Naive thymus-derived CD4-positive, alpha-beta T cell (primary cell): ENCODE measurements at regions of chr1 and their contacts with region 1.

Region 1: GRCh38 chr1:35192853-35193664 is at the start of gene SFPQ:
- DNase-seq: peak; percentile 94 to 99 (median 98)
- ATAC-seq: peak; percentile 94
- H3K4me3 ChIP-seq: peak within 1 kb of the TSS; percentile 72
- H3K4me3 Mint-ChIP-seq: peak within 1 kb of the TSS; percentile 92 to 98 (median 96)
- H3K27ac ChIP-seq: peak within 1 kb of the TSS; percentile 99
- H3K27ac Mint-ChIP-seq: peak within 1 kb of the TSS; percentile 92 to 99 (median 98)
- H3K4me1 ChIP-seq: peaks cover 31 to 32% of the 10 kb centered on the region in 2 donors
- H3K4me1 Mint-ChIP-seq: peaks cover 34 to 52% (median 47%) of the 10 kb centered on the region in 7 donors
- H3K27me3 ChIP-seq: no peaks in the 10 kb centered on the region
- H3K27me3 Mint-ChIP-seq: peaks cover 0 to 5% (median 0%) of the 10 kb centered on the region in 5 donors
- total RNA-seq, gene SFPQ: 316 to 610 (median 356) TPM

Region 2: DNA sequence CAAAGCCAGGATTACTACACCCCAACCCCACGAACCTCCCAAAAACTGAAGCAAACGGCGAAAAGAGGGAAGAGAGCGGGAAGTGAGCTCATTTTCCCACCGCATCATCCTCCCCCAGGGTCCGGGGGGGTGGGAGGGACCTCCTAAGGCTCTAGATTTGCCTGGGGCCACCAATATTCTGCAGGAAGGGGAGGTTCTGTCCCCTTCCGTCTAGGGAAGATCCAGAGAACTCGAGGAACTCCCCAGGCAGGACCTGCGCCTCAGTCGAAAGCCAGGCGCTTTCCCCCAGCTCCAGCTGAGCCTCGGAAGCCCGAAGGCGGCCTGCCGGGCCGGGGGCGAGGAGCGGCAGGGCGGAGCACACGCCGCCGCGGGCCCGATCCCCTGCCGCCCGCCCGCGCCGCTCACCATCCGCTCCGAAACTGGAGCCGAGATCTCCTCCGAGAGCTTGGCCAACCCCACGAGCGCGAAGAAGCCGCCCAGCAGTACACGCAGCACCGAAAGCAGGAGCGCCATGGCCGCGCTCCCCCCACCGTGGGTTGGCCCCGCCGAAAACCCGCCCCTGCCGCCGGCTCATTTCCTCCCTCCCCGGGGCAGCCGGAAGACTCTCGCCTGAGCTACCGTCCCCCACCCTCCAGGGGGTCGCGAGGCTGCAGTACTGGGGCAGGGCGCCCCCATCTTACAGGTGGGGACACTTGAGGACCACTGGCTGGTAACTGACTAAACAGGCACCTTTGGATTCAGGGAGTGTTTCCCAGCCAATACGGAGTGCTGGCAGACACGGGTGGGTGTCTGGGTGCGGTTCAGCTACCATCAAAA is 208.1 kb before region 1 on chr1 and contains the start of gene TMEM35B:
- CTCF ChIA-PET with region 1: no interaction called
- POLR2A ChIA-PET with region 1: interaction called, 8 read pairs
- intact Hi-C with region 1: loop called in 1 of 2 experiments (anchors 1 kb)
- DNase-seq: peak; percentile 69 to 83 (median 79)
- ATAC-seq: peak; percentile 97
- H3K4me3 ChIP-seq: peak within 1 kb of the TSS; percentile 96
- H3K4me3 Mint-ChIP-seq: peak within 1 kb of the TSS; percentile 95 to 100 (median 98)
- H3K27ac ChIP-seq: peak within 1 kb of the TSS; percentile 94
- H3K27ac Mint-ChIP-seq: peak within 1 kb of the TSS; percentile 92 to 99 (median 97)
- H3K4me1 ChIP-seq: peaks cover 16 to 18% of the 10 kb centered on the region in 2 donors
- H3K4me1 Mint-ChIP-seq: peaks cover 12 to 49% (median 40%) of the 10 kb centered on the region in 7 donors
- H3K27me3 ChIP-seq: no peaks in the 10 kb centered on the region
- H3K27me3 Mint-ChIP-seq: no peaks in the 10 kb centered on the region
- total RNA-seq, gene TMEM35B: 5.4 to 37.7 (median 32.8) TPM

Region 3: GRCh38 chr1:35079003-35079930 is 113.8 kb before region 1 on chr1 and contains the start of gene ZMYM1:
- CTCF ChIA-PET with region 1: no interaction called
- POLR2A ChIA-PET with region 1: interaction called, 4 read pairs
- intact Hi-C with region 1: loop called (anchors 1 to 5 kb)
- DNase-seq: peak; percentile 64 to 87 (median 75)
- ATAC-seq: peak; percentile 92
- H3K4me3 ChIP-seq: peak within 1 kb of the TSS; percentile 72
- H3K4me3 Mint-ChIP-seq: peak within 1 kb of the TSS; percentile 84 to 100 (median 98)
- H3K27ac ChIP-seq: peak within 1 kb of the TSS; percentile 86
- H3K27ac Mint-ChIP-seq: peak within 1 kb of the TSS; percentile 97 to 100 (median 99)
- H3K4me1 ChIP-seq: peaks cover 8 to 11% of the 10 kb centered on the region in 2 donors
- H3K4me1 Mint-ChIP-seq: peaks cover 24 to 47% (median 42%) of the 10 kb centered on the region in 7 donors
- H3K27me3 ChIP-seq: no peaks in the 10 kb centered on the region
- H3K27me3 Mint-ChIP-seq: peaks cover 0 to 17% (median 10%) of the 10 kb centered on the region in 5 donors
- total RNA-seq, gene ZMYM1: 11.8 to 21.2 (median 13.9) TPM

Region 4: DNA sequence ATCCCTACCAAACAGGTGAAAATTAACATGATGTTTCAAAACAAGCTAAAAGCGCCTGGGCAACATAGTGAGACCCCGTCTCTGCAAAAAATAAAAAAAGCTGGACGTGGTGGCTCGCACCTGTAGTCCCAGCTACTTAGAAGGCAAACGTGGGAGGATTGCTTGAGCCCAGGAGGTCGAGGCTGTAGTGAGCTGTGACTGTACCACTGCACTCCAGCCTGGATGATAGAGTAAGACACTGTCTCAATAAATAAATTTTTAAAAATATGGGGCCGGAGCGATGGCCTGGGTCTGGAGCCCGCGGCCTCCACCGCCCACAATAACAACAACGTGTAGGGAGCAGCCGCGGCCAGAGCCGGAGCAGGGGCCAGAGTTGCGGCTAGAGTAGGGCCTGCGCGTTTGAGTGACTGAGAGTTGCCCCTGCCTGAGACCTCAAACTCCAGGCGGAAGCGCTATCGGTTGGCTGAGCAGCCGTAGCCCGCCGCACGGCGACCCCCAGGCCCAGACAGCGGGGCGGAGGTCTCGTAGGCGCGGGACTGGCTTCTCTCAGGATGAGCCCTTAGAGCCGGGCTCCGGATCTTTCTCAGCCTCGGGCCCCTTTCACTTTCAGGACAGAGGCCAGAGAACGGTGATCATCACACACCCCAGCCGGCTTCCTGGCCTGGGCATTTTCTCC is 72.5 kb before region 1 on chr1:
- CTCF ChIA-PET with region 1: no interaction called
- POLR2A ChIA-PET with region 1: no interaction called
- intact Hi-C with region 1: no loop called
- DNase-seq: no peak
- ATAC-seq: peak; percentile 32
- H3K4me3 ChIP-seq: no peak overlapping the region
- H3K4me3 Mint-ChIP-seq: peak overlapping the region in 6 of 10 donors; percentile 3 to 42 (median 20)
- H3K27ac ChIP-seq: no peak overlapping the region
- H3K27ac Mint-ChIP-seq: no peak overlapping the region
- H3K4me1 ChIP-seq: peaks cover 0 to 5% of the 10 kb centered on the region in 2 donors
- H3K4me1 Mint-ChIP-seq: peaks cover 4 to 17% (median 5%) of the 10 kb centered on the region in 7 donors
- H3K27me3 ChIP-seq: no peaks in the 10 kb centered on the region
- H3K27me3 Mint-ChIP-seq: peaks cover 8 to 22% (median 11%) of the 10 kb centered on the region in 5 donors

Region 5: DNA sequence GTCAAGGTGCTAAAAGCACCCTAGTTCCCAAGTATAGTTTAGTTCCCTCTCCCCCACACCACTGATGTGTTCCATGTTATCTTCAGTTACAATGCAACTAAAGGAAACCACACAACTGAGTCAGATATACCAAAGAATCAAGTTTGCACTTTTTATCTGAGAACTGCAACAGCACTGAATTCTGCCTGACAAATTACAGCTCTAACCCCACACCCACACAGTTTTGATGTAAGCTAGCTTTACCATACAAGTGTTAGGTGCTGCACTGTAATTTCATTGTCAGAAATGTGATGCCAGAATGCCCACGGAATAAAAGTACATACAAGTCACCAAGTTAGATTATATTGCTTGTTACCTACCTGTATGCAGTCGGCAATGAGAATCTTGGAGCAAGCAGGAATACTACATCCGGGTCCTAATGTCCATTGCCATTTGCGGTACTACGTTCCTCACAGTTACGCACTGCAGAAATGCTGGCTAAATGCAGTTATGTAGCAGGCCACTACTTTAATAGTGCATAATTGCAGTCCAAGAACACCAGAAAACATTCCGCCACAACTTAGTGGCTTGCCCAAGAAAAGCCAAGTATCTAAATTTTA is 12.2 kb before region 1 on chr1:
- CTCF ChIA-PET with region 1: no interaction called
- POLR2A ChIA-PET with region 1: interaction called, 5 read pairs
- intact Hi-C with region 1: loop called (anchors 1 kb)
- DNase-seq: no peak
- ATAC-seq: peak; percentile 14
- H3K4me3 ChIP-seq: no peak overlapping the region
- H3K4me3 Mint-ChIP-seq: peak overlapping the region in 3 of 10 donors; percentile 0 to 18 (median 12)
- H3K27ac ChIP-seq: no peak overlapping the region
- H3K27ac Mint-ChIP-seq: peak overlapping the region in 8 of 9 donors; percentile 6 to 68 (median 22)
- H3K4me1 ChIP-seq: peaks cover 23 to 31% of the 10 kb centered on the region in 2 donors
- H3K4me1 Mint-ChIP-seq: peaks cover 38 to 75% (median 66%) of the 10 kb centered on the region in 7 donors
- H3K27me3 ChIP-seq: no peaks in the 10 kb centered on the region
- H3K27me3 Mint-ChIP-seq: no peaks in the 10 kb centered on the region

Region 6: GRCh38 chr1:35229587-35230360 is 36.7 kb after region 1 on chr1:
- CTCF ChIA-PET with region 1: no interaction called
- POLR2A ChIA-PET with region 1: no interaction called
- intact Hi-C with region 1: no loop called
- DNase-seq: no peak
- ATAC-seq: no peak
- H3K4me3 ChIP-seq: no peak overlapping the region
- H3K4me3 Mint-ChIP-seq: no peak overlapping the region
- H3K27ac ChIP-seq: no peak overlapping the region
- H3K27ac Mint-ChIP-seq: peak overlapping the region in 1 of 9 donors; percentile 33
- H3K4me1 ChIP-seq: no peaks in the 10 kb centered on the region
- H3K4me1 Mint-ChIP-seq: peaks cover 0 to 10% (median 0%) of the 10 kb centered on the region in 7 donors
- H3K27me3 ChIP-seq: no peaks in the 10 kb centered on the region
- H3K27me3 Mint-ChIP-seq: peaks cover 0 to 1% (median 0%) of the 10 kb centered on the region in 5 donors

Region 7: DNA sequence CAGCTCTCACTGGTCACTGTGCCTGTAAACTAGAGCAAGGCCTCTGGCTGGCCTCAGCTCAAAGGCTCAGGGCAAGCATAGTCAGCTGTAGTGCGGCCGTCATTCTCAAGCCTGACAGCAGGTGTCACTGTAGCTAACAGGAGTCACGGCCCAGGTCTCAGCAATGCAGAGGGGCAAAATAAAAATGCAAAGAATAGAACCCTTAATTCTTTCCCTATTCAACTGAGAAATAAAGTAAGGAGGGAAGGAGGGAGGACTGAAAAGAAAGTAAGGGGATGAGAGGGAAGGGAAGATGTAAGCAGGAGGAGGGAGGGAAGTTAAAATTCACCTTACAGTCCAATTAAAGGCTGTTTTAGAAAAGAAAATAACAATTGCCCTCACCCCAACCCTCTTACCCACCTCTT is 258.1 kb after region 1 on chr1:
- CTCF ChIA-PET with region 1: no interaction called
- POLR2A ChIA-PET with region 1: interaction called, 3 read pairs
- intact Hi-C with region 1: loop called in 1 of 2 experiments (anchors 5 kb)
- DNase-seq: peak; percentile 44 to 79 (median 68)
- ATAC-seq: peak; percentile 89
- H3K4me3 ChIP-seq: no peak overlapping the region
- H3K4me3 Mint-ChIP-seq: peak overlapping the region in 9 of 10 donors; percentile 14 to 86 (median 55)
- H3K27ac ChIP-seq: peak overlapping the region; percentile 34
- H3K27ac Mint-ChIP-seq: peak overlapping the region; percentile 31 to 94 (median 77)
- H3K4me1 ChIP-seq: peaks cover 12 to 19% of the 10 kb centered on the region in 2 donors
- H3K4me1 Mint-ChIP-seq: peaks cover 24 to 38% (median 31%) of the 10 kb centered on the region in 7 donors
- H3K27me3 ChIP-seq: no peaks in the 10 kb centered on the region
- H3K27me3 Mint-ChIP-seq: no peaks in the 10 kb centered on the region

Region 8: GRCh38 chr1:35715568-35716002 is 522.5 kb after region 1 on chr1:
- CTCF ChIA-PET with region 1: no interaction called
- POLR2A ChIA-PET with region 1: no interaction called
- intact Hi-C with region 1: loop called in 1 of 2 experiments (anchors 10 kb)
- DNase-seq: peak; percentile 44 to 79 (median 66)
- ATAC-seq: peak; percentile 82
- H3K4me3 ChIP-seq: no peak overlapping the region
- H3K4me3 Mint-ChIP-seq: peak overlapping the region in 6 of 10 donors; percentile 0 to 53 (median 44)
- H3K27ac ChIP-seq: no peak overlapping the region
- H3K27ac Mint-ChIP-seq: peak overlapping the region in 3 of 9 donors; percentile 3 to 73 (median 59)
- H3K4me1 ChIP-seq: peaks cover 15 to 35% of the 10 kb centered on the region in 2 donors
- H3K4me1 Mint-ChIP-seq: peaks cover 26 to 34% (median 33%) of the 10 kb centered on the region in 7 donors
- H3K27me3 ChIP-seq: no peaks in the 10 kb centered on the region
- H3K27me3 Mint-ChIP-seq: no peaks in the 10 kb centered on the region

Region 9: GRCh38 chr1:35882945-35883634 is 690.0 kb after region 1 on chr1 and contains the start of gene AGO1:
- CTCF ChIA-PET with region 1: no interaction called
- POLR2A ChIA-PET with region 1: no interaction called
- intact Hi-C with region 1: loop called in 1 of 2 experiments (anchors 1 kb)
- DNase-seq: peak; percentile 94 to 99 (median 97)
- ATAC-seq: peak; percentile 100
- H3K4me3 ChIP-seq: peak within 1 kb of the TSS; percentile 100
- H3K4me3 Mint-ChIP-seq: peak within 1 kb of the TSS; percentile 90 to 98 (median 94)
- H3K27ac ChIP-seq: peak within 1 kb of the TSS; percentile 79
- H3K27ac Mint-ChIP-seq: peak within 1 kb of the TSS; percentile 72 to 92 (median 84)
- H3K4me1 ChIP-seq: peaks cover 9 to 24% of the 10 kb centered on the region in 2 donors
- H3K4me1 Mint-ChIP-seq: peaks cover 37 to 55% (median 51%) of the 10 kb centered on the region in 7 donors
- H3K27me3 ChIP-seq: no peaks in the 10 kb centered on the region
- H3K27me3 Mint-ChIP-seq: peaks cover 0 to 4% (median 0%) of the 10 kb centered on the region in 5 donors
- total RNA-seq, gene AGO1: 22.5 to 28.0 (median 26.9) TPM